Colonic mucosa (tissue), 4 donors: ENCODE measurements at regions of chr3 and their contacts with region 1.

Region 1: GRCh38 chr3:138417559-138417982 is 16.8 kb upstream of the ESYT3 start:
- DNase-seq: peak; percentile 77
- H3K4me3 ChIP-seq: no peak overlapping the region
- H3K27ac ChIP-seq: no peak overlapping the region
- H3K4me1 ChIP-seq: no peaks in the 10 kb centered on the region
- H3K27me3 ChIP-seq: no peaks in the 10 kb centered on the region
- CTCF ChIP-seq: peak; percentile 87

Region 2: GRCh38 chr3:138935848-138936740 is 518.5 kb after region 1 on chr3:
- intact Hi-C with region 1: loop called (anchors 5 kb)
- DNase-seq: peak; percentile 76
- H3K4me3 ChIP-seq: peak overlapping the region; percentile 36
- H3K27ac ChIP-seq: no peak overlapping the region
- H3K4me1 ChIP-seq: peaks cover 17% of the 10 kb centered on the region
- H3K27me3 ChIP-seq: peaks cover 64% of the 10 kb centered on the region
- CTCF ChIP-seq: peak; percentile 98